ENCODE measurements at regions of chr10 and their contacts with region 1.

Region 1: DNA sequence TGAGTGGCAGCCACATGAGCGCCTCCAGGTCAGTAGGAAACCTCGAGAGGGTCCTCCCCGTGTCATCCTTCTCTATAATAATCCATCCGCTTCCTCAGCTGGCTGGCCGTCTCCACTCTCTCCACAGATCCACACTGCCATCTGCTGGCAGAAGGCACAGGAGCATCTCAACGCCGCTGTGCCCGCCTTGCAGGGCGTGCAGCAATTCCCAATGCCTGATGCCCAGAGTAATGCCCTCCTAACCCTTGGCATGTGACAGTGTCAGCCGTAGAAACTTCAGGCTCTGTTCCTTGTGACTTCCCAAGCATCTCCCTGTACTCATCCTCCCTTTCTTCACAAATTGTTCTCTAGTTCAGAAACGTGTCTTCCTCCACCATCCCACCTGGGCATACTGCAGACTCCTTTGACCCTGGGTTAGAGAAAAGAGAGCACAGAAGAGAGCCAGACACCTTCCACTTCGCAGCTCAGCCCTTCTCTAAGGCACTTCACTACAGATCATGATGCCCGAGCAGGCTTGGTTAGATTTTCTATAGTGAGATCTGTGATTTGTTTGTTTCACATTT is 70.8 kb downstream of the XPNPEP1 start:
- DNase-seq: peak in 1 of 2 donors; percentile 74
- H3K4me3 ChIP-seq: no peak overlapping the region
- H3K27ac ChIP-seq: no peak overlapping the region
- H3K4me1 ChIP-seq: peaks cover 0 to 4% of the 10 kb centered on the region in 2 donors
- H3K27me3 ChIP-seq: no peaks in the 10 kb centered on the region
- CTCF ChIP-seq: peak; percentile 64 to 93 (median 86)

Region 2: DNA sequence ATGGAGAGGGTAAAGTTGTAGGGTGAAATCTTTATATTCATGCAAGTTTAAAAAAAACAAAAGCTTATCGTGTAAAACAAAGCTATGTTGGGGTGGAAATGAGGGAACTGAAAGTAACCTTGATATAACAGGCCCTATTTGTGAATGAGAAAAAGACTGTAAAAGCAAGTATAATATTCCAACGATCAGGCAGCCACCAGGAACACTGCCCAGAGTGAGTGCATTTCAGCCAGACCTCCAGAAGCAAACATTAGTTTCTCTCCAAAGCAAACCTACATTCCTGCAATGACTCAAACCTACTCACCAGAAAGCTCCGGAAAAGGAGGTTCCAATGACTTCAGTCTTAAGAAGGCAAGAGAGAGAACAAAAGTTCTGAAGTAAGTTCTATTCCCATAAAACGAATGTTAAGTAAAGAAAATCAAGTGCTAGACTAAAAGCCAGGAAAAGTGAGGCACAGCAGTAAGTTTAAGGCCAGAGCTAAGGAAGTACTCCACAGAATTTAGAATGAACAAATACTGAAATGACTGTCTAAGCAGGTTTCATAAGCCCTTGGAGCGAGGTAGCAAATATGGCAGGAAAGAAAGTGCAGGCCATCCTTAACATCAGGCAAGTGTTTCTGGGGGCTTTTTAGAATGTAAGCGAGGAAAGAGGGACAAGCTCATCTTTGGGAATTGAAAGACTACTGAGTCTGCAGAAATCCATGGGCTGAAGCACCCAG is 422.4 kb before region 1 on chr10:
- intact Hi-C with region 1: loop called (anchors 10 kb)
- DNase-seq: peak in 1 of 2 donors; percentile 65
- H3K4me3 ChIP-seq: peak overlapping the region in 1 of 2 donors; percentile 14
- H3K27ac ChIP-seq: peak overlapping the region; percentile 89 to 90
- H3K4me1 ChIP-seq: peaks cover 0 to 12% of the 10 kb centered on the region in 2 donors
- H3K27me3 ChIP-seq: no peaks in the 10 kb centered on the region
- CTCF ChIP-seq: no peak

Region 3: DNA sequence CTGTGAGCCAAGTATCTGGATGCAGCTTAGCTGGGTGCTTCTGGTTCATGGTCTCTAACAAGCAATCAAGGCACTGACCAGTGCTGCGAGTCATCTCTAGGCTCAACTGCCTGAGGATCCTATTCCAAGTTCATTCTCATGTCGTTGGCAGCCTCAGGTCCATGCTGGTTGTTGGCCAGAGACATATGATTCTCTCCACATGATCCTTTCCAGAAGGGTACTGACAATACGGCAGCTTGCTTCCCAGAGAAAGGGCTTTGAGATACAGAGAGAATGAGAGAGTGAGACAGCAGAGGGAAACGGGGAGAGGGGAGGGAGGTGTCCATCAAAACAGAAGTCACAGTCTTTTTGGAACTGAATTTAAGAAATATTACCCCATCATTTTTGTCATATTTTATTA is 334.8 kb before region 1 on chr10:
- intact Hi-C with region 1: no loop called
- DNase-seq: no peak
- H3K4me3 ChIP-seq: no peak overlapping the region
- H3K27ac ChIP-seq: no peak overlapping the region
- H3K4me1 ChIP-seq: no peaks in the 10 kb centered on the region
- H3K27me3 ChIP-seq: no peaks in the 10 kb centered on the region
- CTCF ChIP-seq: no peak

Region 4: DNA sequence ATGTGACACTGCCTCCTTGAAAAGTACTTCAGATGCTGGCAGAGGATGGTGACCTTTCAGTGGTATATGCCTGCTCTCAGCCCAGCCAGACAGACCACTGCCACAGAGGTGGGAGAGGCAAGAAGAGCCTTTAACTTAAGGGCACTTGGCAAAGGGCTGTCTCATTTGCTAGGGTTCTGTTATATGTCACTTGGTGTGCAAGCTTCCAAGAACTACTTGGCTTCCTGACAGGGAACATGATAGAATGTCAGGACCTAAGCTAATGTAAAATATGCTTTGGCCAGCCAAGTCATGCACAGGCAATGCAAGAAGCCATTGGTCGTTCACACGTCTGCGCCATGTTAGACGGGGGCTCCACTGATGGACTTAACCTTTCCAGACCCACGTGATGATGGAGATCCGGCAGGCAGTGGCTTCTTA is 846.2 kb after region 1 on chr10:
- intact Hi-C with region 1: no loop called
- DNase-seq: peak in 1 of 2 donors; percentile 34
- H3K4me3 ChIP-seq: no peak overlapping the region
- H3K27ac ChIP-seq: no peak overlapping the region
- H3K4me1 ChIP-seq: no peaks in the 10 kb centered on the region
- H3K27me3 ChIP-seq: no peaks in the 10 kb centered on the region
- CTCF ChIP-seq: no peak

Region 5: GRCh38 chr10:110872145-110872983 is 1019.8 kb after region 1 on chr10:
- intact Hi-C with region 1: no loop called
- DNase-seq: peak in 1 of 2 donors; percentile 88
- H3K4me3 ChIP-seq: peak overlapping the region; percentile 87 to 88
- H3K27ac ChIP-seq: peak overlapping the region; percentile 97 to 99
- H3K4me1 ChIP-seq: peaks cover 11 to 27% of the 10 kb centered on the region in 2 donors
- H3K27me3 ChIP-seq: no peaks in the 10 kb centered on the region
- CTCF ChIP-seq: peak in 1 of 3 experiments; percentile 21